ENCODE measurements at regions of chr6 and their contacts with region 1.

Region 1: GRCh38 chr6:46419576-46420002 is 71.7 kb downstream of the RCAN2 start:
- DNase-seq: peak in 4 of 5 donors; percentile 41 to 65 (median 54)
- ATAC-seq: peak in 2 of 4 donors; percentile 55 to 58
- H3K4me3 ChIP-seq: no peak overlapping the region
- H3K27ac ChIP-seq: peak overlapping the region in 5 of 12 donors; percentile 11 to 61 (median 21)
- H3K4me1 ChIP-seq: peaks cover 0 to 37% (median 14%) of the 10 kb centered on the region in 12 donors
- H3K27me3 ChIP-seq: no peaks in the 10 kb centered on the region
- CTCF ChIP-seq: peak; percentile 64 to 89 (median 80)
- POLR2A ChIP-seq: no peak

Region 2: GRCh38 chr6:45922728-45923351 is 496.7 kb before region 1 on chr6:
- intact Hi-C with region 1: loop called in 2 of 10 experiments (anchors 5 to 10 kb)
- DNase-seq: peak; percentile 58 to 72 (median 62)
- ATAC-seq: peak; percentile 51 to 75 (median 73)
- H3K4me3 ChIP-seq: no peak overlapping the region
- H3K27ac ChIP-seq: peak overlapping the region in 1 of 12 donors; percentile 24
- H3K4me1 ChIP-seq: peaks cover 0 to 58% (median 29%) of the 10 kb centered on the region in 12 donors
- H3K27me3 ChIP-seq: no peaks in the 10 kb centered on the region
- CTCF ChIP-seq: peak; percentile 30 to 71 (median 60)
- POLR2A ChIP-seq: no peak

Region 3: DNA sequence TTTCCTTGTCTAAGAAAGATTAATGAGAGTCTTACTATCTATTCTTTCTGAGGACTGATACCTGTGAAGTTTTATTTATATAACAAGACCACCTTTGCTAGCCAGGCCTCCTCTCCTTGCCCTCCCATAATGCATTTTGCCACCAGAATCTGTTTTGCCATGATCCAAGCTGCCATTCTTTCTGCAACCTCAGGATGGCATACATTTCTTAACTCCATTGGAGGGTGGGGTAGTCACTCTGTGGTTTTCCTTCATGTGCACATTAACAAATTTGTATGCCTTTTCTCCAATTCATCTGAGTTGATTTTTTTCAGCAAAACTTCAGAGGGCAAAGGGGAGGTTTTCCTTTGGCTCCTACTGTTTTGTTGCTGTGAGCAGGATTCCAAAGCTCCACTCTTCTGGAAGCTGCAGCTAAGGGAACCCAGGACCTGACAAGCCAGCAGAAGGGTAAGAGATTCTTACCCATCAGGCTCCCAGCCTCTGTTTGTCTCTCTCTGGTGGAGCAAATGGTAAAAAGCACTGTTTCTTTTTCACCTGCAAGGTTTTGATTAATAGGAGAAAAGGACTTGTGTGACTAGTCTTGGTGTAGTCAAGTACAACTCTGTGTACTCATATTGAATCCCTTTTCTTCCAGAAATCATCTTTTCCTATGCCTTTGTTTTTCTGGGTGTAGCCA is 316.0 kb before region 1 on chr6:
- intact Hi-C with region 1: no loop called
- DNase-seq: no peak
- ATAC-seq: no peak
- H3K4me3 ChIP-seq: no peak overlapping the region
- H3K27ac ChIP-seq: no peak overlapping the region
- H3K4me1 ChIP-seq: peaks cover 0 to 17% (median 0%) of the 10 kb centered on the region in 12 donors
- H3K27me3 ChIP-seq: no peaks in the 10 kb centered on the region
- CTCF ChIP-seq: peak in 4 of 12 donors; percentile 13 to 20 (median 17)
- POLR2A ChIP-seq: no peak

Region 4: GRCh38 chr6:46453221-46453620 is 33.6 kb after region 1 on chr6:
- intact Hi-C with region 1: no loop called
- DNase-seq: no peak
- ATAC-seq: no peak
- H3K4me3 ChIP-seq: no peak overlapping the region
- H3K27ac ChIP-seq: peak overlapping the region in 4 of 12 donors; percentile 28 to 67 (median 54)
- H3K4me1 ChIP-seq: peaks cover 0 to 68% (median 27%) of the 10 kb centered on the region in 12 donors
- H3K27me3 ChIP-seq: no peaks in the 10 kb centered on the region
- CTCF ChIP-seq: no peak
- POLR2A ChIP-seq: no peak

Region 5: DNA sequence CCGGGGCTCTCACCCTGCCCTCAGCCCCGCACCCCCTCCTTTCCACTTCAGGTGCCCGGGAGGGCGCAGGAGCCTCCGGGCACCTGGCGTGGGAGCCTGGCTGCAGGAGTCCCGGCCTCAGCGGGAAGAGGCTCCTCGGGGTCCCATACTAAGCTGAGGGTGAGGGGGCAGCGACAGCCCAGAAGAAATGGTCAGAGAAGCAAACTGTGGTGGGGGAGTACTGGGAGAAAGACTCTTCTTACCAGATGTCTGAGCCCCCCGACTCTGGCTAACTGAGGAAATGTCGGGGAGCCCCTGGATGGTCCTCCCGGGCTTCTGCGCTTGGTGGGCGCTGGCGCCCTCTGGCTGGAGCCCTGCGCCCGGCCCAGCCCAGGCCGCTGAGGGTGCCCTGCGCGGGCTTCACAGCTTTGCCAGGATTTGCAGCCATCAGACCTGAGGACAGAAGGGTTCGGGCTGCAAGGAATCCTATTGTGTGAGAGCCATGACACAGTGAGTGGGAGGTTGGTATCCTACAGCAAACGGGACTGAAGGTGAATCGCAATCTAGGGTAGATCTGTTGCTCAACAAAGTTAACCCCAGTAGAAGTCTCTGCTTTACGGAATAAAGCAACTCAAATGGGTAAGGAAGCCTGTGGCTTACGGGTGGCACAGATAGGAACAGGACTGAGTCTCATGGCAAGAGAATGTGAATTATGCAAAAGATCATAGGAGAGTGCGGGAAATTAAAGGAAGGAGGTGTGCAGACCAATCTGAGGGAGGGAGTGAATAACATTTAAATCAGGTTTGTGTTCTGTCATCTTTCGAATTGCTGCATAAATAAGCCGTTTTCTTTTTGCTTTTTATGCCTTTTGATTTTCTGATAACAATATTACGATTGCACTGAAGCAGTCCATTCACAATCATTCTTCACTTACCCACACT is 72.3 kb after region 1 on chr6:
- intact Hi-C with region 1: loop called (anchors 2 to 5 kb)
- DNase-seq: peak; percentile 66 to 77 (median 77)
- ATAC-seq: peak; percentile 86 to 91 (median 88)
- H3K4me3 ChIP-seq: peak overlapping the region; percentile 43 to 94 (median 72)
- H3K27ac ChIP-seq: peak overlapping the region; percentile 70 to 94 (median 92)
- H3K4me1 ChIP-seq: peaks cover 0 to 37% (median 14%) of the 10 kb centered on the region in 12 donors
- H3K27me3 ChIP-seq: peaks cover 0 to 38% (median 0%) of the 10 kb centered on the region in 9 donors
- CTCF ChIP-seq: peak; percentile 53 to 90 (median 71)
- POLR2A ChIP-seq: no peak

Region 6: DNA sequence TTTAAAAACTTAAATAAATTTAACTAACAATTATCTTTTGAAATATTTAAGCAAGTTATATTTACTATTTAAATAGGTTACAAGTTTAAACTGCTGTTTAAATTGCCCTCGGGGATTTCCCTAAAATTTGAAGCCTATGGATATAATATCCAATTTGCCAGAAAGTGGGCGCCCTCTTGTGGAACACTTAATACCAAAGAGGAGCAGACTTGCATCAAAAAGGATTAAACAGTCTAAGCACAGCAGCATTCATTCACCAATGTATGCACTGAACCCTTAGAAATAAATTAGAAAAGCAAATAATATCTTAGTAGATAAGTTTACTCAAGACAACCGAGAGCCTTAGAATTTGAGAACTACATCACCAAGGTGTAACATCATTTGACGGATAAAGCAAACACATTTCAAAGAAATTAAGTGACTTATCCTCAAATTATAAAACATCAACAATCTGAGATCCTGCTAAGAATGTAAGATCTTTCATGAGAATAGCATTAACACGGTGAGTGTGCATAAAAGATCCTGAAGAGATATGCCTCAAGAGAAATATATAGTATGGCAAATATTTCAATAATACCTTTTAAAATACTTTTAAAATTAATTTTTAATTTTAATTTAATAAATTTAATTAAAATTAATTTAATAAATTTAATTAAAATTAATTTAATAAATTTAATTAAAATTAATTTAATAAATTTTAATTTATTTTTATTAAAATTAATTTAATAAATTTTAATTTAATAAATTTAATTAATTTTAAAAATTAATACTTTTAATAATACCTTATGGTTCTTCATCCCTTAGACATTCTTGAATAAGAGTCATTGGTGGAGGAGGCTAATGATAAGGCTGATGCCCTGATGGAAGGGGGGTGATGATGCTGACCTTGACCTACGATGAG is 362.1 kb after region 1 on chr6:
- intact Hi-C with region 1: loop called in 4 of 10 experiments (anchors 5 to 10 kb)
- DNase-seq: peak in 4 of 5 donors; percentile 38 to 52 (median 48)
- ATAC-seq: no peak
- H3K4me3 ChIP-seq: no peak overlapping the region
- H3K27ac ChIP-seq: no peak overlapping the region
- H3K4me1 ChIP-seq: peaks cover 0 to 5% (median 0%) of the 10 kb centered on the region in 12 donors
- H3K27me3 ChIP-seq: no peaks in the 10 kb centered on the region
- CTCF ChIP-seq: peak; percentile 26 to 77 (median 62)
- POLR2A ChIP-seq: no peak

Region 7: GRCh38 chr6:46993846-46994245 is 574.3 kb after region 1 on chr6:
- intact Hi-C with region 1: loop called in 4 of 10 experiments (anchors 5 to 10 kb)
- DNase-seq: no peak
- ATAC-seq: no peak
- H3K4me3 ChIP-seq: no peak overlapping the region
- H3K27ac ChIP-seq: no peak overlapping the region
- H3K4me1 ChIP-seq: peaks cover 0 to 25% (median 16%) of the 10 kb centered on the region in 12 donors
- H3K27me3 ChIP-seq: no peaks in the 10 kb centered on the region
- CTCF ChIP-seq: no peak
- POLR2A ChIP-seq: no peak

Region 8: DNA sequence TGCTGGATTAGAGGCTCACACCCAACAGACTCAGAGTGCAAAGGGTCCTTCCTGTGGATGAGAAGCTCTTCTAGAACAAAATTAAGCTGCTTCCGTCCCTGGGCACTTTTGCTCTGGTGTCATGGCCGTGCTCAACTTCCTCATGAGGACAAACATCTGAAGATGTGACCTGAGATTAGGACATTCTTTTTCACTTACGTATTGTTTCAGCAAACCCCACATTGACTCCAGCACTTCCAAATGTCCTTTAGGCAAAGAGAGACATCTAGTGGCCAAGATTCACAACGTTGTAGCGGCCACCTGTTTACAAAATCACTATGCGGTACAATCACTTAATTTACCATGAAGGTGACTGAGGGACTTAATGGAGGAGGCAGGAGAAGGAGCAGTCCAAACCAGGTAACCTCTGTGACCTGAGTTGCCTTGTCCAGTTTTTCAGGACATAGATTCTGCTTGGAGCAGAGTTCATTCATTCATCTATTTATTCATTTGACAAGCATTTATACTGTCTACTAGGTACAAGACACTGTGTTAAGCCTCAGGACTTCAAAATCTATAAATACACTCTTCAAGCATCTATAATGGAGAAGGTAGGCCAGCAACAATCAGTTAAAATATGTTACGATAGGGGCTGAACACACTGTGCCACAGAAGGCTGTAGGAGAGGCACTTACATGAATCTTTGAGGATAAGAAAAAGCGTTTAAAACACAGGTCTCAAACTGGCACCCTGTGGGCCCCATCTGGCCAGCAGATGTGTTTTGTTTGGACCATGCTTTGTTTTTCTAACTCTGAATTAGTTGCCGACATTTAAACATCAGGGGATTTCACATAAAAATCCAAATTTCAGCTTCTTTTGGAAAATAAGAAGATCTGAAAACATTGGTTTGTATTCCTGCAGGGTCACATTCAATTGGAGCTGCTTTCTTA is 628.2 kb after region 1 on chr6:
- intact Hi-C with region 1: loop called in 2 of 10 experiments (anchors 5 to 10 kb)
- DNase-seq: peak in 4 of 5 donors; percentile 35 to 50 (median 44)
- ATAC-seq: peak; percentile 71 to 91 (median 84)
- H3K4me3 ChIP-seq: no peak overlapping the region
- H3K27ac ChIP-seq: peak overlapping the region in 4 of 12 donors; percentile 12 to 54 (median 36)
- H3K4me1 ChIP-seq: peaks cover 0 to 13% (median 5%) of the 10 kb centered on the region in 12 donors
- H3K27me3 ChIP-seq: no peaks in the 10 kb centered on the region
- CTCF ChIP-seq: peak; percentile 48 to 87 (median 78)
- POLR2A ChIP-seq: no peak

Measured in heart left ventricle (tissue), 16 donors.